ENCODE measurements at regions of chr13 and their contacts with region 1.

Region 1: DNA sequence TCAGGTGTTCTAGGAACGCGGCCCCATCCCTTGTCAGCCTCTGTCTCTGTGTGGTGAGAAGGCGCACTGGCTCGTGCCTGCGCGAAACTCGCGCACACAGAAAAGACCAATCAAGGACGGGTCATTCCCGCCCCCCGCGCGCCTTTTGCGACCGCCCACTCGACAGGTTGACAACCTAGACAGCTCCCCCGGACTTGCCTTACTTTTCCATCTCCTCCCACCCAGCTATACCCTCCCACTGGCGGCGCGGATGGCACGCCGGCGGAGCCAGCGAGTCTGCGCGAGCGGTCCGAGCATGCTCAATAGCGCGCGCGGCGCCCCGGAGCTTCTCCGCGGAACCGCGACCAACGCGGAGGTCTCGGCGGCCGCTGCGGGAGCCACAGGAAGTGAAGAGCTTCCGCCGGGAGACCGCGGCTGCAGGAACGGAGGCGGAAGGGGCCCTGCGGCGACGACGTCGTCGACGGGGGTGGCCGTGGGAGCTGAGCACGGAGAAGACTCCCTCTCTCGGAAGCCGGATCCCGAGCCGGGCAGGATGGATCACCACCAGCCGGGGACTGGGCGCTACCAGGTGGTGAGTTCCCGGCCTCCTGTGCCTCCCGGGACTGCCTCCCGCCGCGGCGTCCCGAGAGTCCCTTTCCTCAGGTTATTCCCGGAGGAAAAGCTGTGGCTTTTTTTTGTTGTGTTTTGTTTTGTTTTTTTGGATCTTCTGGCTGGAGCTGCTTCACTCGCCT is at the start of gene NDFIP2:
- DNase-seq: peak; percentile 25 to 88
- H3K4me3 ChIP-seq: peak within 1 kb of the TSS; percentile 62 to 86 (median 84)
- H3K27ac ChIP-seq: no peak within 1 kb of the TSS
- H3K4me1 ChIP-seq: peaks cover 0 to 3% (median 1%) of the 10 kb centered on the region in 4 experiments; a peak in 2 of 7 replicates
- H3K27me3 ChIP-seq: no peaks in the 10 kb centered on the region; a peak in 1 of 7 replicates
- CTCF ChIP-seq: no peak
- EP300 ChIP-seq: no peak
- POLR2A ChIP-seq: 0 out of 3 replicates have a peak, but pooled peaks of 1 of the 2 experiments have one; percentile 45
- RAD21 ChIP-seq: no peak
- total RNA-seq, gene NDFIP2: 30.4 and 32.9 TPM in 2 replicates

Region 2: DNA sequence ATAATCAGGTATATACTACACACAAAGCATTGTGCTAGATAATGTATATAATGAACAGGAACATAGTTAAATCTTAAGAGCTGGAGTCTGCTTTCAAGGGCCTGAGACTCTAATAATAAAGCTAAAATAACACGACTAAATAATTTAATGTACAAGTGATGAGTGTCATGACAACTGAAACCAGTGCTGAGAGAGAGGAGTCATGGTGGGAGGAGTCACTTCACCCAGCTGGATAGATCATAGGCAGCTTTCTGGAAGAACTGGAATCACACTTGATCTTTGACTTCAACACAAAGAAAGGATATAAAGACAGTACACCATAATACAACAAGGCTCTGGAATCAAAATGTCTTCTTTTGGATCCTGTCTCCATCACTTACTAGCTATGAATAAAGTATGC is 82.2 kb before region 1 on chr13:
- CTCF ChIA-PET with region 1: no interaction called
- POLR2A ChIA-PET with region 1: no interaction called
- DNase-seq: no peak
- H3K4me3 ChIP-seq: no peak overlapping the region
- H3K27ac ChIP-seq: no peak overlapping the region
- H3K4me1 ChIP-seq: peaks cover 0 to 5% (median 2%) of the 10 kb centered on the region in 4 experiments; a peak in 4 of 7 replicates
- H3K27me3 ChIP-seq: no peaks in the 10 kb centered on the region
- CTCF ChIP-seq: no peak
- EP300 ChIP-seq: no peak
- POLR2A ChIP-seq: no peak
- RAD21 ChIP-seq: no peak

Region 3: GRCh38 chr13:79501538-79502232 is 20.6 kb after region 1 on chr13:
- CTCF ChIA-PET with region 1: interaction called, 14 read pairs
- POLR2A ChIA-PET with region 1: interaction called, 3 read pairs
- DNase-seq: no peak
- H3K4me3 ChIP-seq: no peak overlapping the region
- H3K27ac ChIP-seq: no peak overlapping the region
- H3K4me1 ChIP-seq: peaks cover 0 to 3% (median 1%) of the 10 kb centered on the region in 4 experiments; a peak in 3 of 7 replicates
- H3K27me3 ChIP-seq: no peaks in the 10 kb centered on the region
- CTCF ChIP-seq: no peak
- EP300 ChIP-seq: no peak
- POLR2A ChIP-seq: no peak
- RAD21 ChIP-seq: no peak